Activated CD4-positive, alpha-beta memory T cell treated with anti-CD3 and anti-CD28 coated beads for 36 hours (primary cell): ENCODE measurements at regions of chr11 and their contacts with region 1.

Region 1: DNA sequence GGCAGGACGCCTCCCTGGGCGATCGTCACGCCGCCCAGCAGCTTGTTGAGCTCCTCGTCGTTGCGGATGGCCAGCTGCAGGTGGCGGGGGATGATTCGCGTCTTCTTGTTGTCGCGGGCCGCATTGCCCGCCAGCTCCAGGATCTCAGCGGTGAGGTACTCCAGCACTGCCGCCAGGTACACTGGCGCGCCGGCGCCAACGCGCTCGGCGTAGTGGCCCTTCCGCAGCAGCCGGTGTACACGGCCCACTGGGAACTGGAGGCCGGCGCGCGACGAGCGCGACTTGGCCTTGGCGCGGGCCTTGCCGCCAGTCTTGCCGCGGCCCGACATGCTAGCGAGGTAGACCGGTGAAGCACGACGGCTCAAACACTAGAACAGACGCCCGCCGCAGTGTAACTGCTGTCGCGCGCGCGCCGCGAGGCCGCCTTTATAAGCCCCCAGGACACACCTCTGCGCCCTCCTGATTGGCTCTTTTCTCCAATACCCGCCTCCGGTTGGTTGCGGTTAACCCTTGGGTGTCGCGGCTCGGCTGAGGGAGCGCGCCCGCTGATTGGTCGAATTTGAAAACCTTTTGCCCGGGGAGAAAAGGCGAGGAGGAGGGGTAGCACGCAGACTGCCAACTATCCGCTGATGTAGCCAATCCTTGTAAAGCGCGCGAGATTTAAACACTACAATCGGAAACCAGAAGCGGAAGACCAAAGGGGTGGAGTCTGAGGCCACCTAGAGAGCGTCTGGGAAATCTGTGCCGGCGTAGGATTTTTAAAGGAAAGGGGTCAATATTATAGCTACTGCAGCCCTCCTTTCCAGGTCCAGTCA is 6.4 kb downstream of the DPAGT1 start:
- DNase-seq: peak; percentile 100
- H3K4me3 Mint-ChIP-seq: peak overlapping the region; percentile 95
- H3K27ac Mint-ChIP-seq: peak overlapping the region; percentile 94
- H3K4me1 Mint-ChIP-seq: peaks cover 39% of the 10 kb centered on the region
- H3K27me3 Mint-ChIP-seq: peaks cover 3% of the 10 kb centered on the region

Region 2: GRCh38 chr11:119018074-119018938 is 77.0 kb before region 1 on chr11 and contains the starts of genes RPS25 and TRAPPC4:
- CTCF ChIA-PET with region 1: no interaction called
- POLR2A ChIA-PET with region 1: interaction called, 9 read pairs
- intact Hi-C with region 1: loop called (anchors 1 kb)
- DNase-seq: peak; percentile 98
- H3K4me3 Mint-ChIP-seq: peak within 1 kb of the TSS; percentile 99
- H3K27ac Mint-ChIP-seq: peak within 1 kb of the TSS; percentile 99
- H3K4me1 Mint-ChIP-seq: peaks cover 54% of the 10 kb centered on the region
- H3K27me3 Mint-ChIP-seq: no peaks in the 10 kb centered on the region
- total RNA-seq, gene RPS25: 1,852 to 1,922 TPM
- total RNA-seq, gene TRAPPC4: 86.4 to 87.8 TPM

Region 3: DNA sequence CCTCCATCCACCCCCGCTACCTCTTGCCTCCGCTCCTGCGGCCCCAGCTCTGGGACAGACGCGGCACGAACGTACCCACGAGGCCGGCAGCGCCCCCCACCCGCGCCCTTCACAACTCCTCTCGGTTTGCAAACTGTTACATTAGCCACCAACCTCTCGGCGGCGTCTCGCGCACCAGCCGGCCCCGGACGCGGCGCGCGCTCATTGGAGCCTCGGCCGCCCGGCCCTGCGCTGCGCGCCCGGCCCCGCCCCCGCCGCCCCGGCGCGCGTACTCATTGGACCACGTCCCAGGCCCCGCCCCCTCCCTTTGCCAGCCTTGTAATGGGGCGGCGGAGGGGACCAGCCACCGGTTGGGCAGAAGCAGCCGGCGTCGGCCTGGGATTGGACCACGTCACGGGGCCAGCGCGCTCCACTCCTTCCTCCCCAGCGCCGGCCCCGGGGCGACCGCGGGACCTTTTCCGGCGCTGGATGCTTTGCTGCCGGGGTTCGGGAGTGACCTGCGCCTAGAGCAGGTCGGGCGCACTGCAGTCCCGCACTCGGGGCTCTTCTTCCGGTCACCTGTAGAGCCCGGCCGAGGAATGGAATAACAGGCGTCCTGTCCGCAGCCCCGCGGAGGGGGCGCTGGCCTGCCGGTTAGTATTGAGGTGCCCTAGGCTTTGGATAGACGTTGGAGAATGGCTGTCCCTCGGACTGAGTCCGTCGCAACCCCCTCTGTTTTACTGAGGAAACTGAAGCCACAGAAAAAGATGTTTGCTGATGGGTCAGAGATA is 38.1 kb before region 1 on chr11 and contains the start of gene HYOU1:
- CTCF ChIA-PET with region 1: no interaction called
- POLR2A ChIA-PET with region 1: interaction called, 15 read pairs
- intact Hi-C with region 1: loop called (anchors 1 kb)
- DNase-seq: peak; percentile 99
- H3K4me3 Mint-ChIP-seq: peak within 1 kb of the TSS; percentile 96
- H3K27ac Mint-ChIP-seq: peak within 1 kb of the TSS; percentile 94
- H3K4me1 Mint-ChIP-seq: peaks cover 38% of the 10 kb centered on the region
- H3K27me3 Mint-ChIP-seq: no peaks in the 10 kb centered on the region
- total RNA-seq, gene HYOU1: 127 to 136 TPM

Region 4: DNA sequence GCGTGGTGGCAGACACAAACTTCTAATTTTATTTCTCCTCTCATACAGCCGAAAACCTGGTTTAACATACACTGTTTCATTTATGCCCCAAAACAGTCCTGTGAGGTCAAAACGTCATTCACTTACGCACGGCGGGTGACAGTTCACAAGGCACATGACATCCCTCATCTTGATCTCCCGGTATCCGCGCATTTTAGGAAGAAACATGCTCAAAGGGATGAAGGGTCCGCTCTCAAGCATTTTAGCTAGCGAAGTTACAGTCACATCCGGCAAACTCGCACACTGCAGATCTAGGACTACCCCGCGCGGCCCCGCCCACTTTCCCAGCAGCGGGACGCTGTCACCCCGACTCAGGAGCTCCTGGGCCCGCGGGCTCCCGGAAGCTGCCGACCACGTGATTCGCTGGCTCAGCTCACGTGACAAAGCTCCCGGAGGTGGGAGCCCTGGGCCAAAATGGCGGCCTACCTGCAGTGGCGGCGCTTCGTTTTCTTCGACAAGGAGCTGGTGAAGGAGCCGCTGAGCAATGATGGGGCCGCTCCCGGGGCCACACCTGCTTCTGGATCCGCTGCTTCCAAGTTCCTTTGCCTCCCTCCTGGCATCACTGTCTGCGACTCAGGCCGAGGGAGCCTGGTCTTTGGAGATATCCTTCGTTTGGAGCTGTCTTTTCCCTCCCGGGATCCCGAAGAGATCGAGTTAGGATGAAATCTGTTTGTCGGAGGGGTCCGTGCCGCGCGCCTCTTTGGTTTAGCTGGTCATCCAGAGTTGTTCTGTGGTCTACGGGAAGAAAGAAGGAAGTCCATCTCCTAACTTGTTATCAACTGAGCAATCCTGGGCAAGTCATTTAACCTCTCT is 27.7 kb before region 1 on chr11 and contains the start of gene VPS11:
- CTCF ChIA-PET with region 1: interaction called, 8 read pairs
- POLR2A ChIA-PET with region 1: interaction called, 13 read pairs
- intact Hi-C with region 1: loop called (anchors 1 kb)
- DNase-seq: peak; percentile 99
- H3K4me3 Mint-ChIP-seq: peak within 1 kb of the TSS; percentile 96
- H3K27ac Mint-ChIP-seq: peak within 1 kb of the TSS; percentile 97
- H3K4me1 Mint-ChIP-seq: peaks cover 38% of the 10 kb centered on the region
- H3K27me3 Mint-ChIP-seq: no peaks in the 10 kb centered on the region
- total RNA-seq, gene VPS11: 19.2 to 21.1 TPM

Region 5: DNA sequence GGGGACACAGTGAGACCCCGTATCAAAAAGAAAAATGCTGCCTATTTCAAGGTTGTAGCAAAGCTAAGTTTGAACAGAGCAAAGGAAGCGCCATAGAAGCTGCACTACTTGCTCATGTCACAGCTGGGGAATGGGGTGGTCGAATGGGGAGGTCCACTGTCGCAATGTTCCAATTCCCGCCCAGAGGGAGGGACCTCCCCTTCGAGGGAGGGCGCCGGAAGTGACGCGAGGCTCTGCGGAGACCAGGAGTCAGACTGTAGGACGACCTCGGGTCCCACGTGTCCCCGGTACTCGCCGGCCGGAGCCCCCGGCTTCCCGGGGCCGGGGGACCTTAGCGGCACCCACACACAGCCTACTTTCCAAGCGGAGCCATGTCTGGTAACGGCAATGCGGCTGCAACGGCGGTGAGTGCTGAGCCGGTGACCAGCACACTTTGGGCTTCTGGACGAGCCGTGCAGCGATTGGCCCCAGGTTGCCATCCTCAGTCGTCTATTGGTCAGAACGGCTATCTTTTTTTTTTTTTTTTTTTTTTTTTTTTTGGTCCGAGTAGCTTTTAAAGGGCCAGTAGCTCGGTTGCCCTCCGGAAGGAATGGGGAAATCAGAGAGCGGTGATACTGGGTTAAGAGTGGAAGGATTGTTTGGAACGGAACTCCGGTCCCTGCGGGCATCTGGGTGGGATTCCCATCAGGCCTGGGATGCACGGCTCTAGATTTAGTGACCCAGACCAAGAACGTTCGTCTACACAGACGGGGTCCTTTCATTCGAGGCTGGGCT is 10.4 kb before region 1 on chr11 and contains the start of gene HMBS:
- CTCF ChIA-PET with region 1: interaction called, 5 read pairs
- POLR2A ChIA-PET with region 1: interaction called, 41 read pairs
- intact Hi-C with region 1: loop called (anchors 1 kb)
- DNase-seq: peak; percentile 93
- H3K4me3 Mint-ChIP-seq: peak within 1 kb of the TSS; percentile 98
- H3K27ac Mint-ChIP-seq: peak within 1 kb of the TSS; percentile 95
- H3K4me1 Mint-ChIP-seq: peaks cover 21% of the 10 kb centered on the region
- H3K27me3 Mint-ChIP-seq: no peaks in the 10 kb centered on the region
- total RNA-seq, gene HMBS: 31.2 to 33.8 TPM

Region 6: GRCh38 chr11:119121008-119121810 is 25.9 kb after region 1 on chr11 and contains the start of gene HINFP:
- CTCF ChIA-PET with region 1: interaction called, 6 read pairs
- POLR2A ChIA-PET with region 1: interaction called, 6 read pairs
- intact Hi-C with region 1: loop called (anchors 2 kb)
- DNase-seq: peak; percentile 100
- H3K4me3 Mint-ChIP-seq: peak within 1 kb of the TSS; percentile 88
- H3K27ac Mint-ChIP-seq: peak within 1 kb of the TSS; percentile 78
- H3K4me1 Mint-ChIP-seq: peaks cover 28% of the 10 kb centered on the region
- H3K27me3 Mint-ChIP-seq: no peaks in the 10 kb centered on the region
- total RNA-seq, gene HINFP: 22.3 to 24.3 TPM

Region 7: GRCh38 chr11:119196833-119197483 is 101.7 kb after region 1 on chr11:
- CTCF ChIA-PET with region 1: interaction called, 8 read pairs
- POLR2A ChIA-PET with region 1: no interaction called
- intact Hi-C with region 1: loop called (anchors 2 kb)
- DNase-seq: peak; percentile 72
- H3K4me3 Mint-ChIP-seq: no peak overlapping the region
- H3K27ac Mint-ChIP-seq: no peak overlapping the region
- H3K4me1 Mint-ChIP-seq: peaks cover 3% of the 10 kb centered on the region
- H3K27me3 Mint-ChIP-seq: no peaks in the 10 kb centered on the region

Region 8: DNA sequence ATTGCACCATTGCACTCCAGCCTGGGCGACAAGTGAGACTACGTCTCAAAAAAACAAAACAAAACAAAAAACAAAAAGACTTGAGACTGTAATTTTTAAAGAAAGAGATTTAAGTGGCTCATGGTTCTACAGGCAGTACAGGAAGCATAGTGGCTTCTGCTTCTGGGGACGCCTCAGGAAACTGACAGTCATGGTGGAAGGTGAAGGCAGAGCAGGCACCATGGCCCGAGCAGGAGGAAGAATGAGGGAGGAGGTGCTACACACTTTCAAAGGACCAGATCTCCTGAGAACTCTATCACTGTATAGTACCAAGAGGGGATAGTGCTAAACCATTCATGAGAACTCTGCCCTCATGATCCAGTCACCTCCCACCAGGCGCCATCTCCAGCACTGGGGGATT is 162.9 kb after region 1 on chr11:
- CTCF ChIA-PET with region 1: no interaction called
- POLR2A ChIA-PET with region 1: no interaction called
- intact Hi-C with region 1: no loop called
- DNase-seq: peak; percentile 28
- H3K4me3 Mint-ChIP-seq: no peak overlapping the region
- H3K27ac Mint-ChIP-seq: peak overlapping the region; percentile 30
- H3K4me1 Mint-ChIP-seq: peaks cover 54% of the 10 kb centered on the region
- H3K27me3 Mint-ChIP-seq: no peaks in the 10 kb centered on the region